ENCODE measurements at regions of chr1 and their contacts with region 1.

Region 1: GRCh38 chr1:62436466-62437256 is at the start of gene USP1:
- DNase-seq: peak; percentile 99
- ATAC-seq: peak; percentile 92
- H3K4me3 Mint-ChIP-seq: peak within 1 kb of the TSS; percentile 89
- H3K27ac Mint-ChIP-seq: peak within 1 kb of the TSS; percentile 98
- H3K4me1 Mint-ChIP-seq: peaks cover 29% of the 10 kb centered on the region
- H3K27me3 Mint-ChIP-seq: no peaks in the 10 kb centered on the region
- total RNA-seq, gene USP1: 62.4 to 73.4 TPM

Region 2: DNA sequence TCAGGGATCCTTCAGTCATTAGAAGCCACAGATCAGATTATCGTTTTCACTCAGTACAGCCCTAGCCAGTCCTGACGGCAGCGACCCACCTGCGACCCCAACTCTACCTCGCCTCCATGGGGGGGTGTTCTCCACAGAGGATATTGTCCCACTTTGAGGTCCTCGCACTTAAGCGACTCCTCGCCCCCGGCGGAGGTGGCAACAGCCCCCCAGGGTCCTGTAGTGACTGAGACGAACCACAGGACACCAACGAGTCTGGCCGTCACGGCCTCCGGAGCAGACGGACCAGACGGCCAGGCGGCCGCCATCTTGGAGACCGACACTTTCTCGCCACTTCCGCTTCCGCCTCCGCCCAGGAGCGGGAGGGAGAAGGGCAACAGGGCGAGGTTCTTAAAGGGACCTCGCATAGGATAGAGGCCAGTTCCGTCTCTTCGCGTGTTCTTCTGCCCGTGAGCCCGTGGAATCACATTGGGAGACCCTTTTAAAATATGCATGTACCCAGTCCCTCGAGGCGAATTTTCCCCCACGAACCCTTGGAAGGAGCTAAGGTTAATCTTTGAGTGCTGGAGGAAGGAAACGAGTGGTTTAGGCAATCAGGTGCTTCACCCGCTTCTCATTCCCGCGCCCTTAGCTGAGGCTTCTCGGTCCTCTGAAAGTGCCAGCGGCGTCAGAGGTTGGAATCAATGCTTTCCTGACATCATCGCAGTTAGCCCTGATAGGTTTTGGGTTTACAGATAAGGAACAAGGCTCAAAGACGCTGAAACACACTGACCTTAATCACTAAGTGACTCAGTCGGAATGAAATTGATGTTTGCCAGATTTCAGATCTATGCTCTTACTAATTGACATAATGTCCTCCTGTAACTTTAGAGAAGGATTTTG is 711.6 kb before region 1 on chr1 and contains the start of gene TM2D1:
- CTCF ChIA-PET with region 1: no interaction called
- POLR2A ChIA-PET with region 1: no interaction called
- intact Hi-C with region 1: loop called in 1 of 2 experiments (anchors 1 kb)
- DNase-seq: peak; percentile 92
- ATAC-seq: peak; percentile 93
- H3K4me3 Mint-ChIP-seq: peak within 1 kb of the TSS; percentile 97
- H3K27ac Mint-ChIP-seq: peak within 1 kb of the TSS; percentile 98
- H3K4me1 Mint-ChIP-seq: peaks cover 17% of the 10 kb centered on the region
- H3K27me3 Mint-ChIP-seq: no peaks in the 10 kb centered on the region
- total RNA-seq, gene TM2D1: 20.8 to 26.4 TPM

Region 3: DNA sequence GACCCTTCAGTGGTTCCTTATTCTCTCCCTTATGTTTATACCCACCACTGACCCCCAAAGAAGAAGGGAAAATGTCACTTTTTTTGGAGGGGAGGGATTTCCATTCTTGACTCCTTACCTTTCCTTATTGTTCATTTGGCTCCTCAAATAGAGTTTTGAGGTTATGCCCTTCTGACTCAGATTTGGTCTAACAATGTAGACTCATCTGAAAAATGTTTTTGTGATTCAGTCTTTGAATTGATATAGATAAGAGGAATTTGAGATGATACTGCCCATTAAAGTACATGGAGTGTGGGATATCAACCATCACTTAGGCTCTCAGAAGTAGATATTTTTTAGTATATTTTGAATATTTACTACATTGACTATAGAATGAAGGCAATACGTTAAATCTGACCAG is 16.3 kb after region 1 on chr1:
- CTCF ChIA-PET with region 1: interaction called, 4 read pairs
- POLR2A ChIA-PET with region 1: interaction called, 3 read pairs
- intact Hi-C with region 1: loop called in 1 of 2 experiments (anchors 2 kb)
- DNase-seq: no peak
- ATAC-seq: peak; percentile 26
- H3K4me3 Mint-ChIP-seq: no peak overlapping the region
- H3K27ac Mint-ChIP-seq: peak overlapping the region; percentile 5
- H3K4me1 Mint-ChIP-seq: peaks cover 11% of the 10 kb centered on the region
- H3K27me3 Mint-ChIP-seq: no peaks in the 10 kb centered on the region

Region 4: DNA sequence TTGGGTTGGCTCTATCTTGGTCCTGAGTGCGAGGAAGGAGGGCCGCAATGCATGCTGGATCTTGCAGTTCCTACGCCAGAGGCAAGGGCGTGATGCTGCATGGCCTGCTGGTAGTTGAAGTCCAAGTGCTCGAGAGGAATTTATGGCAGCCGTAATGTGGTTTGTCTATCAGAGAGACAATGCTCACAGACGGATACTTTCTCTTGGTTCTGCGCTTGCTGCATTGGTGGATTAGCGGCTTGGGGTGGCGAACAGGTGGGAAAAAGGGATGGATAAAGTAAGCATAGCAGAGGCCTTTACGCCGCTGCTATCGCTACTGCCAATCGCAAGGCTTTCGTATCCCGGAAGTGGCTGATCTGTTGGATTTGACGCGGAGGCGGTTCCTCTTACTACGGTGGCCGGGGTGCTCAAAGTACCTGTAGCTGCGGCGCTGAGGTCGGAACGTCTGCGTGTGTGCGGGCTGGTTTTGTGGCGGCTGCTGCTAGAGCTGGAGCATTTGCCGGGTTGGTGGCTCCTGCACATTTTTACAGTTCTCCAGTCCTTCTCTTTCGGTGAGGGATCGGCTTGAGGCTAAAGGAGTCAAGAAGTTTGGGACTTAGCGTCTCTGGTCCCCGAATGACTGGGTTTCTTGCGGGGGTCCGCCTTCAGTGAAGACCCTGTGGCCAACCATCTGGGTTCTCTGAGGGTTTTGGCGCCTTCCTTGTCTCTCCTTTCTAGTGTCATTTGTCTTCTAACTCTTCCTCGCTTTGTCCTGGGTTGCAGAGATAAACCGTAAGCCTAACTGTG is 347.3 kb after region 1 on chr1 and contains the start of gene ATG4C:
- CTCF ChIA-PET with region 1: no interaction called
- POLR2A ChIA-PET with region 1: no interaction called
- intact Hi-C with region 1: loop called (anchors 1 kb)
- DNase-seq: peak; percentile 96
- ATAC-seq: peak; percentile 99
- H3K4me3 Mint-ChIP-seq: no peak within 1 kb of the TSS
- H3K27ac Mint-ChIP-seq: no peak within 1 kb of the TSS
- H3K4me1 Mint-ChIP-seq: peaks cover 17% of the 10 kb centered on the region
- H3K27me3 Mint-ChIP-seq: peaks cover 10% of the 10 kb centered on the region
- total RNA-seq, gene ATG4C: 16.2 to 17.7 TPM

Region 5: GRCh38 chr1:63367215-63368103 is 930.8 kb after region 1 on chr1 and contains the start of gene ALG6:
- CTCF ChIA-PET with region 1: no interaction called
- POLR2A ChIA-PET with region 1: no interaction called
- intact Hi-C with region 1: loop called (anchors 1 to 5 kb)
- DNase-seq: peak; percentile 94
- ATAC-seq: peak; percentile 94
- H3K4me3 Mint-ChIP-seq: peak within 1 kb of the TSS; percentile 98
- H3K27ac Mint-ChIP-seq: peak within 1 kb of the TSS; percentile 82
- H3K4me1 Mint-ChIP-seq: peaks cover 23% of the 10 kb centered on the region
- H3K27me3 Mint-ChIP-seq: peaks cover 5% of the 10 kb centered on the region
- total RNA-seq, gene ALG6: 16.2 to 16.3 TPM

Region 6: DNA sequence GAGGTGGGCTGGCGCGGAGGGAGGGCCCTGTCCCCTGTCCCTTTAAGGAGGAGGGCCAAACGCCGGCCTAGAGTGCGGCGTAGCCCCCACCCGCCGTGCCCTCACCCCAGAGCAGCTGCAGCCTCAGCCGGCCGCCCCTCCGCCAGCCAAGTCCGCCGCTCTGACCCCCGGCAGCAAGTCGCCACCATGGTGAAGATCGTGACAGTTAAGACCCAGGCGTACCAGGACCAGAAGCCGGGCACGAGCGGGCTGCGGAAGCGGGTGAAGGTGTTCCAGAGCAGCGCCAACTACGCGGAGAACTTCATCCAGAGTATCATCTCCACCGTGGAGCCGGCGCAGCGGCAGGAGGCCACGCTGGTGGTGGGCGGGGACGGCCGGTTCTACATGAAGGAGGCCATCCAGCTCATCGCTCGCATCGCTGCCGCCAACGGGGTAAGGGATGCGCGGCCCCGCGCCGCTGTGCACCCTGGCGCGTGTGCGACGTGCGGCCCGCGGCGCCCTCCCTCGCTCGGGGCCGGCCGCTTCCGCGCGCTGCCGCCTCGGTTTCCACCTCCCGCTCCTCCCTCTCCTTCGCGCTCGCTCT is 1156.7 kb after region 1 on chr1 and contains the start of gene PGM1:
- CTCF ChIA-PET with region 1: no interaction called
- POLR2A ChIA-PET with region 1: no interaction called
- intact Hi-C with region 1: loop called (anchors 1 to 10 kb)
- DNase-seq: peak; percentile 89
- ATAC-seq: peak; percentile 85
- H3K4me3 Mint-ChIP-seq: peak within 1 kb of the TSS; percentile 97
- H3K27ac Mint-ChIP-seq: peak within 1 kb of the TSS; percentile 96
- H3K4me1 Mint-ChIP-seq: peaks cover 27% of the 10 kb centered on the region
- H3K27me3 Mint-ChIP-seq: no peaks in the 10 kb centered on the region
- total RNA-seq, gene PGM1: 38.8 to 43.8 TPM

Measured in activated CD4-positive, alpha-beta T cell treated with anti-CD3 and anti-CD28 coated beads for 36 hours (primary cell).